CD4-positive, alpha-beta T cell (primary cell): ENCODE measurements at regions of chr2 and their contacts with region 1.

Region 1: GRCh38 chr2:204260162-204260877 is 285.0 kb upstream of the PARD3B start:
- DNase-seq: peak in 13 of 14 experiments; percentile 4 to 64 (median 31)
- ATAC-seq: peak; percentile 62
- H3K4me3 ChIP-seq: no peak overlapping the region
- H3K4me3 Mint-ChIP-seq: no peak overlapping the region
- H3K27ac ChIP-seq: no peak overlapping the region
- H3K27ac Mint-ChIP-seq: no peak overlapping the region
- H3K4me1 ChIP-seq: no peaks in the 10 kb centered on the region
- H3K4me1 Mint-ChIP-seq: no peaks in the 10 kb centered on the region
- H3K27me3 ChIP-seq: peaks cover 6 to 7% of the 10 kb centered on the region in 2 experiments
- H3K27me3 Mint-ChIP-seq: peaks cover 42% of the 10 kb centered on the region
- CTCF ChIP-seq: peak; percentile 77

Region 2: DNA sequence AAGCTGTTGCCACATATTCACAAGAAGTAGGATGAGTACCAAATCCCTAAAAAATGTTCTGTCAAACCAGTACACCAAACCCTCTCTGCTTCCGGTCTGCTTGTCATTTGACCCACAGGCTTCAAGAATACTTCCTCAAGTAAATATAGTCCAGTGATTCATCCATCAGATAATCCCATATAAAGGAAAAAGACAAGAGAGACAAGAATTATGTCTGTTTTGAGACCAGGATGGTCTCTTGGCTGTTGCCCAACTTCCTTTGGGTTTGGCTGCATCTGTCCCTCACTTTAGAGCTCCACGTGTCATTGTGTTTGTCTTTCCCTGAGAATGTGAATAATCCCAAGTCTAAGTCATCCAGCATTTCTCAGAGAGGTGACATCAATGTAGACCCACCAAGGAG is 1330.4 kb after region 1 on chr2:
- CTCF ChIA-PET with region 1: no interaction called
- POLR2A ChIA-PET with region 1: no interaction called
- intact Hi-C with region 1: no loop called
- DNase-seq: no peak
- ATAC-seq: no peak
- H3K4me3 ChIP-seq: no peak overlapping the region
- H3K4me3 Mint-ChIP-seq: no peak overlapping the region
- H3K27ac ChIP-seq: no peak overlapping the region
- H3K27ac Mint-ChIP-seq: no peak overlapping the region
- H3K4me1 ChIP-seq: no peaks in the 10 kb centered on the region
- H3K4me1 Mint-ChIP-seq: no peaks in the 10 kb centered on the region
- H3K27me3 ChIP-seq: peaks cover 0 to 5% of the 10 kb centered on the region in 2 experiments
- H3K27me3 Mint-ChIP-seq: no peaks in the 10 kb centered on the region
- CTCF ChIP-seq: no peak

Region 3: DNA sequence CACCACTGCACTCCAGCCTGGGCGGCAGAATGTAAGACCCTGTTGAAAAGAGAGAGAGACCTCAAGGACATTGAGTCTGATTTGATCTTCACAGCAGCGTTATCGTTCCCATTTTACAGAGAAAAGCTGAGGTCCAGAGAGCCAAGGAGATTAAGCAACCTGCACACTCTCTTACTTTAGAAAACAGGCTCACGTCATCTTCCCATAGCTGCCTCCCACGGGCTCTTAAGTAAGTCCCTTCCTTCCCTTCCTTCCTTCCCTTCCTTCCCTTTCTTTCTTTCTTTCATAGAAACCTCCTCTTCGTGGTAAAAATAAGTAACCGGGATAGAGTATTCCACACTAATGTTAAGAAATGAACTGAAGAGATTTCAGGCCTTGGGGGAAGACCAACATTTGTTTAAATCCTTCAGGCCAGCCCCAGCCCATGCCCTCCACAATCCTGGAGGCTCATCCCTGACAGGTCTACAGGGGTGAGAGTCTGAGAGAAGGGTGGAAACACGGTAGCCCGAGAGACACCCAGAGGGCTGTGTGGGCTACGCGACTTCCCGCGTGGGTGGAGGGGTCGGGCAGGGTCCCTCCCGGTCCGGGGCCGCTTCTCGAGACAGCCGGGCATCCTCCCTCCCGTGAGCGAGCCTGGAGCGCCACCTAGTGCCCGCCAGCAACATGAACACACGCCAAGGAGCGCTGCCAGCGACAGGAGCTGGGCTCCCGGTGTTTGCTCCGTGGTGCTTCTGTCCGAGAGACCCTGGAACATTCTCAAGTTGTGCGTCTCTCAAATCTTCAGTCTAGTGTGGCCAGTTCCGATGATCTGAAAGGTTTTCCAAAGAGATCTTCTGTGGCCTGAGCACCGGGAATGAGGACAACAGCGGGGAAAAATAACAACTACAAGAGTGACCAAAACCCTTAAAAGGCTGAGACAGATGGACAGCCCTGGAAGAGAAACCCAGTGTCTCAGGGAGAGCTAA is 1665.3 kb after region 1 on chr2:
- CTCF ChIA-PET with region 1: interaction called, 6 read pairs
- POLR2A ChIA-PET with region 1: no interaction called
- intact Hi-C with region 1: loop called (anchors 1 kb)
- DNase-seq: peak; percentile 46 to 80 (median 59)
- ATAC-seq: peak; percentile 76
- H3K4me3 ChIP-seq: no peak overlapping the region
- H3K4me3 Mint-ChIP-seq: no peak overlapping the region
- H3K27ac ChIP-seq: no peak overlapping the region
- H3K27ac Mint-ChIP-seq: no peak overlapping the region
- H3K4me1 ChIP-seq: peaks cover 9% of the 10 kb centered on the region
- H3K4me1 Mint-ChIP-seq: peaks cover 10% of the 10 kb centered on the region
- H3K27me3 ChIP-seq: peaks cover 20 to 26% of the 10 kb centered on the region in 2 experiments
- H3K27me3 Mint-ChIP-seq: peaks cover 68% of the 10 kb centered on the region
- CTCF ChIP-seq: peak; percentile 74

Region 4: GRCh38 chr2:205947621-205948495 is 1687.5 kb after region 1 on chr2:
- CTCF ChIA-PET with region 1: no interaction called
- POLR2A ChIA-PET with region 1: no interaction called
- intact Hi-C with region 1: loop called in 1 of 2 experiments (anchors 1 kb)
- DNase-seq: peak; percentile 18 to 65 (median 42)
- ATAC-seq: peak; percentile 68
- H3K4me3 ChIP-seq: no peak overlapping the region
- H3K4me3 Mint-ChIP-seq: no peak overlapping the region
- H3K27ac ChIP-seq: no peak overlapping the region
- H3K27ac Mint-ChIP-seq: no peak overlapping the region
- H3K4me1 ChIP-seq: peaks cover 7% of the 10 kb centered on the region
- H3K4me1 Mint-ChIP-seq: no peaks in the 10 kb centered on the region
- H3K27me3 ChIP-seq: peaks cover 0 to 4% of the 10 kb centered on the region in 2 experiments
- H3K27me3 Mint-ChIP-seq: peaks cover 23% of the 10 kb centered on the region
- CTCF ChIP-seq: peak; percentile 89